Vagina (tissue), 2 donors: ENCODE measurements at regions of chr2 and their contacts with region 1.

Region 1: DNA sequence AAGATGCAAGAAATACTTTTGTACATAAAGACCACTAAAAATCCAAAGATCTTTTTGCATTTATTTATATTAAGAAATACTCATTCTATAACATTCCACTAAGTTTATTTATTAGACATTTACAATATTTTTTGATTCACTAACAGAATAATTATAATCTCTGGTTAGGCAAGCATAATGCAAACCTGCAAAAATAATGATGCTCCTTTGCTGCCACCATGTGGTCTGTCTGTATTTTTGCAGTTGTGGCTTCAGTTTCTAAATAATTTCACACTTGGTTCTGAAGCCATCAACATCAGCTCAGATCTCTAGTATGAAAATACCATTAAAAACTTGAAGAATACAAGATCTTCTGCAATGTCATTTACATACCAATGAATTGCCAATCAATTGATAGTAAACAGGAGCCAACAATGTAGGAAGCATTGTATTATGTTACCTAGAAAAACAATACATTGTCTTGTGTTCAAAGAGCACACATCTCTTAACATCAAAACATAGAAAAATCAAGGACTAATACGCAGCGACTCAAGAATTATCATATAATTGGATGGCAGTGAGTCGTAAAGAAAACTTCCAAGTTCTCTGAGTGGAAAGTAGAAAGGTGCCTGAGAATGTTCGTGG is 28.8 kb upstream of the WDR75 start:
- DNase-seq: no peak
- H3K4me3 ChIP-seq: no peak overlapping the region
- H3K27ac ChIP-seq: peak overlapping the region; percentile 63
- H3K4me1 ChIP-seq: peaks cover 13% of the 10 kb centered on the region
- H3K27me3 ChIP-seq: no peaks in the 10 kb centered on the region
- CTCF ChIP-seq: peak in 2 of 3 experiments; percentile 75 to 82
- POLR2A ChIP-seq: no peak

Region 2: GRCh38 chr2:188518381-188518780 is 894.1 kb before region 1 on chr2:
- intact Hi-C with region 1: loop called (anchors 5 kb)
- DNase-seq: no peak
- H3K4me3 ChIP-seq: no peak overlapping the region
- H3K27ac ChIP-seq: no peak overlapping the region
- H3K4me1 ChIP-seq: peaks cover 5% of the 10 kb centered on the region
- H3K27me3 ChIP-seq: no peaks in the 10 kb centered on the region
- CTCF ChIP-seq: no peak
- POLR2A ChIP-seq: no peak

Region 3: DNA sequence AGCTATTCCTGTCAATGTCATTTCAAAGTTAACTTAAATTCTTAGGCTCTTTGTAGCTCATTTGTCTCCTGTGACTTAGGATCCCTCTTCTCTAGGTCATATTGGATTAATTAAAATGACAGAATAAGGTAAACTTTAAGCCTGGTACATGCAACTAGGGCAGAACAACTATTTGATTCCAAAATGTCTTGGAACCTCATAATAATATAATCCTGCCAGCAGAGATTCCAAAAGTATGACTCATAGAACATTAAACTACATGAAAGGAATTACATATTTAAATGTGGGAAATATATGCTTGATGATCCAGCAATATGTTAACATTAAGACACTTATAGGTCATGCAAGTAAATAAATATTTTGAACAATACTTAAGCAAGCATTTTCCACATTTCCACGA is 374.9 kb before region 1 on chr2:
- intact Hi-C with region 1: no loop called
- DNase-seq: no peak
- H3K4me3 ChIP-seq: no peak overlapping the region
- H3K27ac ChIP-seq: no peak overlapping the region
- H3K4me1 ChIP-seq: no peaks in the 10 kb centered on the region
- H3K27me3 ChIP-seq: no peaks in the 10 kb centered on the region
- CTCF ChIP-seq: no peak
- POLR2A ChIP-seq: no peak